ENCODE measurements at regions of chr10 and their contacts with region 1.

Region 1: DNA sequence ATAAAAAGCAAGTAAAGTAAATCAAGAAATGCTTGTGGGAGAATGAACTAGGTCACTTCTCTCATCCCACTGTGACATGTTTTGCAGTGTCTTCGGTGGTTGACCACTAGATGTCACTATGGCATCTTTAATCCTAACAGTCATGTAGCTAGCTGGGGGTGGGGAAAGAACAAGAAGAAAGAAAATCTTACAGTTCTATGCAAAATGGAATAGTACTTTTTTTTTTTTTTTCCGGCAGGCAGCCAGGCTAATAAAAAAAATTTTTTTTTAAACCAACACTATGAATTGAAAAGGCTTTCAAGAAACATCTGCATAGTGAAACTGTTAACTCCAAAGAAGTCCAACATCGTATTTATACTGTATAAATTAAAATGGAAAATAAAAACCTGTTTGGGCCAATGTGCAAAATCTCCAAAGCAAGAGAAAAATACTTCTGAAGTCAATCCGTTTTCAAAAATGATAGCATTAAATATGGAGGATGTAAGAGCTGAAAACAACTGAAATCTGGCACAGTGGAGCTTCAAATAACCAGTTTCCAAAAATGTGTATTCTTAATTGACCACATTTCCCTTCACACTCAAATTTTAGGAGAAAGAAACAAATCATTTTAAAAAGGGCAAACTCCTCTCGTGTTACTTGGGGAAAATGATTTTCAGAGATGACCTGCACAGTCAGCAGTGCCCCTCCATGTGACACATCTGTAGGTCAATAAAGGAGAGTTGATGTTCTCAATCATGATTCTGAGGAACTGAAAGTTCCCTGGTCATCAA is 38.5 kb downstream of the CDK1 start:
- DNase-seq: no peak
- ATAC-seq: peak; percentile 97
- H3K4me3 ChIP-seq: no peak overlapping the region
- H3K27ac ChIP-seq: peak overlapping the region; percentile 33
- H3K4me1 ChIP-seq: peaks cover 4% of the 10 kb centered on the region
- H3K27me3 ChIP-seq: no peaks in the 10 kb centered on the region
- CTCF ChIP-seq: peak; percentile 80

Region 2: DNA sequence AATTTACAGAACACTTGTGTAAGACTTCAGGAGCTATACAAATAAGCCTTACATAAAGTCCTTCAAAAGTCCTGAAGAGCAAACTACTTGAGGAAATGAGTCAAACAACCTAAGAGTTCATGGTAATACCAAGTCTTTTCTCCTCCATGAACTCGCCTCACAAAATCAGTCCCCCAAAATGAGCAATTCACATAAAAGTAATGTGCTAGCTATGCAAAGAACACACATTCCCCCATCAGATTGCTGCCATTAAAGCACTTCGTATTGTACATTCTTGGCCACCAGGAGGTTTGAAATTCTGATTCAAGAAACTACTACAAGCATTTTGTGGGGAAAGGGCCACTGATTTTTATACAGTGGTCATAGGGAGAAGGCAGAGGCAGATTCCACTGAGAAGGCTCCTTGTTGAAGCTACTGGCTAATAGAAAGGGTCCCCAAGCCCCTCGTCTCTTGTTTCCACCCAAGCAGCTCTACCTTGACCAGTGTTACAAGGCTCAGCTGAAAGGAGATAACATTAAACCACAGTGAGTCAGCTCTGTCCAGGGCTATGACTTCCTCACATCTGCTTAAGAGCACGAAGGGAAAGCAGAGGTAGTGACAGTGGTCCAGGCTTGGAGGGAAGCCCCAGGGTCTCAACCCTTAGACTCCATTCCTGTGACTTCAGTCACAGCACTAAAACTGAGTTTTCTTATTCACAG is 153.7 kb before region 1 on chr10:
- intact Hi-C with region 1: no loop called
- DNase-seq: no peak
- ATAC-seq: peak; percentile 67
- H3K4me3 ChIP-seq: no peak overlapping the region
- H3K27ac ChIP-seq: peak overlapping the region; percentile 53
- H3K4me1 ChIP-seq: peaks cover 11% of the 10 kb centered on the region
- H3K27me3 ChIP-seq: no peaks in the 10 kb centered on the region
- CTCF ChIP-seq: no peak

Region 3: GRCh38 chr10:60896033-60896432 is 79.2 kb after region 1 on chr10:
- intact Hi-C with region 1: no loop called
- DNase-seq: no peak
- ATAC-seq: no peak
- H3K4me3 ChIP-seq: no peak overlapping the region
- H3K27ac ChIP-seq: no peak overlapping the region
- H3K4me1 ChIP-seq: peaks cover under 1% of the 10 kb centered on the region
- H3K27me3 ChIP-seq: no peaks in the 10 kb centered on the region
- CTCF ChIP-seq: no peak

Region 4: DNA sequence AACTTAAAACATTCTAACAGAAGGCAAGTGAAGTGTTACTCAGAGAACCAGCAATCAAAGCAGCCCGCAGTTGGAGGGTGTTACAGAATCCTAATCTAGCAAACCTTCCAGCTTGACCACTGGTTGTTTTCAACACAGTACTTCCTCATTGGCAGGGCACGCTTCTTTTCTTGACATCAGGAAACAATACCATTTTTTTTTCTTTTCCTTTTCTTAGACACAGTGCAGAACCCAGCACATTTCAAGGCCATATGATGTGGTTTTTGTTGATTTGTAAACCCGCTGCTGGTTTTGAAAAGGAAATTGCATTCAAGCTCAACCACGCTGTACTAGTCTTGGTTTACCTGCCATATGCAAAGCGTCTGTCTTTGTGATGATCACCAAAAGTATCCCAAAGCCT is 93.7 kb after region 1 on chr10:
- intact Hi-C with region 1: no loop called
- DNase-seq: peak; percentile 66
- ATAC-seq: peak; percentile 88
- H3K4me3 ChIP-seq: no peak overlapping the region
- H3K27ac ChIP-seq: peak overlapping the region; percentile 45
- H3K4me1 ChIP-seq: peaks cover 25% of the 10 kb centered on the region
- H3K27me3 ChIP-seq: no peaks in the 10 kb centered on the region
- CTCF ChIP-seq: no peak

Region 5: GRCh38 chr10:60964257-60965235 is 147.7 kb after region 1 on chr10:
- intact Hi-C with region 1: loop called (anchors 10 kb)
- DNase-seq: no peak
- ATAC-seq: peak; percentile 95
- H3K4me3 ChIP-seq: no peak overlapping the region
- H3K27ac ChIP-seq: peak overlapping the region; percentile 38
- H3K4me1 ChIP-seq: peaks cover 12% of the 10 kb centered on the region
- H3K27me3 ChIP-seq: no peaks in the 10 kb centered on the region
- CTCF ChIP-seq: peak; percentile 86

Region 6: DNA sequence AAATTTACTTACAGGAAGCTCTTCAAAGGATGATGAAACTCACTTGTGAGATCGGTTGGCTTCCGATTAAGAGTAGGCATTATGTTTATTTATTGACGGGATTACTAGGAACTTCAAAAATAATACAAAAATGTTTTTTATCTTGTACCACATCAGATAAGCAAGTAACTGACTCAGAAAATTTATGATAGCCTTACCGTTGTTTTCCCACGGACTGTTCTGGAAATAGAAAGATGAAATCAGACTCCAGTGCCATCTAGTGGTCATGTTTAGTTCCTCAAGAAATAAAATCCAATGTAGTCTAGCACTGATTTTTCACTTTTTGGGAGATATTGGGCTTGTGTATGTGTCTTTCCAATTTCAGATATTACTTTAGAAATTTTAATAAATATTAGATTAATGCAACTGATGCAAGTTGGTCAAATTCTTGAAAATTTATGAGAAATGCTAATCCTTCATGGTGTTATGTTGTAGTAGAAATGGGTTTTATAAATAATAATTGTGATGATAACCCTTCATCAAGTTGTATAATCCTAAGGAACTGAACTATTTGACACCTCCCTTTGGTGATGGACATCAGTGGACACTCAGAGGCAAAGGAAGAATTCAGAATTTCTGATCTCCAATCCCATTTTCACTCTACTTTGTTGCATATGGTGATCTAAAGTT is 467.5 kb after region 1 on chr10:
- intact Hi-C with region 1: loop called (anchors 10 kb)
- DNase-seq: no peak
- ATAC-seq: peak; percentile 72
- H3K4me3 ChIP-seq: no peak overlapping the region
- H3K27ac ChIP-seq: no peak overlapping the region
- H3K4me1 ChIP-seq: peaks cover 12% of the 10 kb centered on the region
- H3K27me3 ChIP-seq: no peaks in the 10 kb centered on the region
- CTCF ChIP-seq: peak; percentile 81